Cardiac septum (tissue), 1 donor: ENCODE measurements at regions of chr6 and their contacts with region 1.

Region 1: GRCh38 chr6:150142670-150143515 is at the start of gene PPP1R14C:
- DNase-seq: no peak
- total RNA-seq, gene PPP1R14C: 91.5 TPM

Region 2: GRCh38 chr6:150099546-150099945 is 43.3 kb before region 1 on chr6:
- intact Hi-C with region 1: no loop called
- DNase-seq: no peak

Region 3: DNA sequence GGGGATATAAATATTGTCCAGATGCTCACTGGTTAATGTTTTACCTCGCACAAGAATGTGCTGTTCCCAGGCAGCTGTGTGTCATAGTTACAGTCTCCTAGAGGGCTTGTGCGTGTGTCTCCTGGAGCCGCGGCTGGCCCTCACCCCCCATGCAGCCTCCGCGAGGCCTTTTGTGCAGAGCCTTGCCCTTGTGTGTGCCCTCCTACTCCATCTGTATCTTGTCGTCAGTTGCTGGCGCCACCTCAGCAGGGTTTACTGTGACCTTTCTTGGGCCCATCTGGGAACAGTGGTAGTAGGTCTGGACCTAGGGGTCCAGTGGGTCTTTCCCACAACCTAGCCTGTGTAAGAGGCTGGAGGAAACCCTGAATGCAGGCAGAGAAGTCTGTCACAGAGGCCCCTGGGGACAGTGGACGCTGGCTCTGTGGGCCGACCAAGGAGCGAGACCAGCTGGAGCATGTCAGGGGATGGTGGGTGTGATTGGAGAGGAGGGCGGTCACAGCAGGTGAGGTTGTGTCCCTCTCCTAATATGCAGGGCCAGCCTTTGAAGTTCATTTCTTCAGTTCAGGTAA is 35.1 kb after region 1 on chr6:
- intact Hi-C with region 1: loop called (anchors 5 kb)
- DNase-seq: no peak

Region 4: GRCh38 chr6:150238336-150238741 is 95.4 kb after region 1 on chr6:
- intact Hi-C with region 1: loop called (anchors 5 kb)
- DNase-seq: peak; percentile 81

Region 5: DNA sequence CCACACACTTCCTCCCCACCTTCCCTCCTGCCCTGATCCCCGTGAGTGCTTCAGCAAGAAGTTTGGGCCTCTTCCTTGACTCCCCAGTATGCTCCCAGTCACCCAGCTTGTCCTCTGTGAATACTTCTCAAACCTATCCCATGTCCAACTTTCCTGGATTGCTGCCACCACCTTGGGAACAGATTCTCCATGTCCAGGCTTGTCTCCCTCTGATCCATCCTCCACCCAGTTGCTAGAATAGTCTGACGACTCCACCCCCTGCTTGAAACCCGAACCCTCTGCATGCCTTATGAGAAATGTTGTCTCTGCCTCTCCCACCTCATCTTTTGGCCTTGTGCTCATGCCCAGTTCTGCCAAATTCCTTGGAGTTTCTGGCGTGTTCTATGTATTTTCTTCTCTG is 107.9 kb after region 1 on chr6:
- intact Hi-C with region 1: loop called (anchors 5 kb)
- DNase-seq: no peak

Region 6: DNA sequence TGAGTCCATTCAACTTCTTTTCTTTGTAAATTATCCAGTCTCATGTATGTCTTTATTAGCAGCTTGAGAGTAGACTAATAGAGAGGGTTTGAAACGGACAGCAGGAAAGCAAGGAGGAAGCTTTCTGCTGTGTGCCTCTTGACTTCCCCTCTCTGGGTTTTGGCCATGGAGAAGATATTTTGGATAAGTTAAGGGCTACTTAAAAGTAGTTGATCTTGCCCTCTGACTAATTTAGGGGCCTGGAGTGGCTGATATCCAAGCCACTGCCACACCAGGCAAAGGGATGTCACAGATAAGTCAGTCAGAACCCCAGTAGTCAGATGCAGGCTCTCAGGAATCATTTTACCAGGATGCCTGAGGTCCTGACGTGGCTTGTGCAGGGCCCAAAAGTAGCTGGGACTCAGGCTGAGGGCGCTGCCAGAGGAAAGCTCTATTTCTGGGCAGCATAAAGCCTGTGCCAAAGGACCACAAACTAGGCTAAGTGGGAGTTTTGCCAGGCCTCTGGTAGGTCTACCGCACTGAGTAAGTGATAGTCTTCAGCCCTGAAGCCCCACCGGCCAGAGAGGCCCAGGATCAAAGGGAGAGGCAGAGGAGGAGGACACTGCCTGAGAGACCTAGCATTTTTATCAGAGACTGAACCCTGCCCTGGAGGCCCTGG is 184.4 kb after region 1 on chr6:
- intact Hi-C with region 1: loop called (anchors 2 kb)
- DNase-seq: no peak